ENCODE measurements at regions of chr1 and their contacts with region 1.

Region 1: GRCh38 chr1:178620584-178621475 is 104.2 kb upstream of the RALGPS2 start:
- DNase-seq: no peak
- H3K4me3 ChIP-seq: no peak overlapping the region
- H3K27ac ChIP-seq: no peak overlapping the region
- H3K4me1 ChIP-seq: no peaks in the 10 kb centered on the region
- H3K27me3 ChIP-seq: no peaks in the 10 kb centered on the region
- CTCF ChIP-seq: no peak
- EP300 ChIP-seq: no peak
- POLR2A ChIP-seq: no peak

Region 2: GRCh38 chr1:178573330-178573729 is 47.5 kb before region 1 on chr1:
- intact Hi-C with region 1: loop called in 1 of 4 experiments (anchors 5 kb)
- DNase-seq: no peak
- H3K4me3 ChIP-seq: no peak overlapping the region
- H3K27ac ChIP-seq: no peak overlapping the region
- H3K4me1 ChIP-seq: no peaks in the 10 kb centered on the region
- H3K27me3 ChIP-seq: no peaks in the 10 kb centered on the region
- CTCF ChIP-seq: no peak
- EP300 ChIP-seq: no peak
- POLR2A ChIP-seq: no peak

Measured in ovary (tissue), 10 donors.